Gastrocnemius medialis (tissue), 4 donors: ENCODE measurements at regions of chr4 and their contacts with region 1.

Region 1: GRCh38 chr4:123744664-123745290 is 348.2 kb downstream of the SPRY1 start:
- DNase-seq: no peak
- ATAC-seq: peak; percentile 68 to 75
- H3K4me3 ChIP-seq: peak overlapping the region in 1 of 4 donors; percentile 34
- H3K27ac ChIP-seq: peak overlapping the region; percentile 47 to 65 (median 53)
- H3K4me1 ChIP-seq: peaks cover 32 to 33% of the 10 kb centered on the region in 2 donors
- H3K27me3 ChIP-seq: no peaks in the 10 kb centered on the region
- CTCF ChIP-seq: no peak
- POLR2A ChIP-seq: no peak

Region 2: DNA sequence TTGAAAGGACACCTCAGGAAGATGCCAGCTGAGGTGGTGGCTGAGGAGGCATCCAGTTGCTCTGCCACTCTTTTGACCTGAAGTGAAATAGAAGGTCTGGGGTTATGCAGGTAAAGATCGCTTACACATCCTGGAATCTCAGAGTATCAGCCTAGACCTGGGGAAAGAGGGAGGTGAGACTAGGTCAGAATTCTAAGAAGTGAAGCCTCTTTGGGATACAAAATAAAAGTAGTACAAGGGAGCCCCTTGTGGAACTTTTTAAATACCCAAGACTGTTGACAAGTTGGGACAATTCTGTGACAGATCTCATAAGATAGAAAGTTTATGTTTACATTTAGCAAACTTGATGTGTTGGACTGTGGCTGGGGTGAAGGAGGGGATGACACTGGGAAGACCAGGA is 85.0 kb before region 1 on chr4:
- in situ Hi-C with region 1: no loop called
- intact Hi-C with region 1: no loop called
- DNase-seq: no peak
- ATAC-seq: peak in 1 of 2 donors; percentile 39
- H3K4me3 ChIP-seq: no peak overlapping the region
- H3K27ac ChIP-seq: no peak overlapping the region
- H3K4me1 ChIP-seq: peaks cover 8 to 13% of the 10 kb centered on the region in 2 donors
- H3K27me3 ChIP-seq: no peaks in the 10 kb centered on the region
- CTCF ChIP-seq: peak in 3 of 5 experiments; percentile 13 to 30 (median 18)
- POLR2A ChIP-seq: no peak

Region 3: GRCh38 chr4:123689341-123689740 is 55.4 kb before region 1 on chr4:
- in situ Hi-C with region 1: no loop called
- intact Hi-C with region 1: loop called (anchors 10 kb)
- DNase-seq: no peak
- ATAC-seq: no peak
- H3K4me3 ChIP-seq: no peak overlapping the region
- H3K27ac ChIP-seq: no peak overlapping the region
- H3K4me1 ChIP-seq: peaks cover 0 to 6% of the 10 kb centered on the region in 2 donors
- H3K27me3 ChIP-seq: no peaks in the 10 kb centered on the region
- CTCF ChIP-seq: no peak
- POLR2A ChIP-seq: no peak

Region 4: DNA sequence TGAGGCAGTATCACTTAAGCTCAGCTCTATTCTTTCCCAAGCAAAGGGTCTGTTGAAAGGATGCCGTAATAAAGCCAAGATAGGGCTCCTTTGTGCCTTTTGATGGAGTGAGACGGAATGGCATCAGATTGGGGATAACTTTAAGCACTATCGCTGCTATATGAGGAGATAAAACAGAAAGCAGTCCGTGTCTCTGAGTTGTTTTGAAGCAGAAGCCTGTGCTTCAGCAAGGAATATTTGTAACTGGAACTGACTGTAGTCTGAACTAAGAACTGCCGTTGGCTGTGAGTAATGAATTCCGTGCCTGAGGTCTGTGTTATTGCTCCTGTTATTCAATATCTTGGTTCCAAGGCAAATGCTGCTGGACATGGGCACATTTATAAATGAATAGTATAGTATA is 670.4 kb after region 1 on chr4:
- in situ Hi-C with region 1: no loop called
- intact Hi-C with region 1: no loop called
- DNase-seq: no peak
- ATAC-seq: no peak
- H3K4me3 ChIP-seq: no peak overlapping the region
- H3K27ac ChIP-seq: no peak overlapping the region
- H3K4me1 ChIP-seq: no peaks in the 10 kb centered on the region
- H3K27me3 ChIP-seq: no peaks in the 10 kb centered on the region
- CTCF ChIP-seq: no peak
- POLR2A ChIP-seq: no peak